Posterior cingulate gyrus (tissue), 11 donors: ENCODE measurements at regions of chr6 and their contacts with region 1.

Region 1: DNA sequence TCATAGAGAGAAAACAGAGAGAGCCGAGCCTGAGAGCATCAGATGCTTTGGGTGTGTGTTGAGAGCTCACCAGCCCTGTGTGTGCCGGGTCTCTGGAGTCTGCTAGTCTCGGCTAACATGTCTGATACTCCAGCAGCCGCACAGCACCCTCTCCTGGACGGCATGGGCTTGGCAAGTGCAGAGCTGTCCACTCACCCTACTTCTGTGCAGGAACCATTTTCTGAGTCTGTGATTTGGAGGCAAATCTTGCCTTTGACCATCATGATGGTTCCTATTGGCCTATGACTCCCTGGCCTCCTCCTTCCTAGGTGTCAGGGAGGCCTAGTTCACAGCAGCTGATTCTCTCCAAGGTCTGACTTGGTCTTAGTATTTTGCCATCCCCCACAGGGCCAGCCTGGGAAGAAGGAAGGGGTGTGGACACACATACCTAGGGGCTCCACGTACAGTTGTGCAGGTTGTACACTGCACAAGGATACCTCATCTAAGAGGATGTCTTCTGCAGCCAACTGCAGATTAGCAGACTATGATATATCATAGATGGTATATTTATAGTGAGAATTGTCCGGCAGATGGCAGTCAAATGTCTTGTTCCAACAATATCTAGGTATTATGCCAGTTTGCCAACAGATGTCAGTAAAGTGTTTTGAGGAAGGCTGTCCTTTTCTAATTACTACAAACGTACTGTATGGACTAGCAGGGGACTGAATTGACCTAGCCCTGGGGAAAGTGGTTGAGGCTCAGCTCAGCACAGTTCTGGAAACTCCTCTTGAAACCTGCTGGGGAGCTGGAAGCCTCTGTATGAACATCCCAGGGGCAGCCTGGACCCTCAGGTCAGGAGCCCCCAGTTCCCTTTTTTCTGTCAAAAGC is 13.0 kb downstream of the FGD2 start:
- DNase-seq: peak; percentile 85 to 99 (median 94)

Region 2: GRCh38 chr6:36979347-36979742 is 39.1 kb before region 1 on chr6:
- intact Hi-C with region 1: loop called (anchors 1 kb)
- DNase-seq: peak; percentile 65 to 96 (median 78)

Region 3: GRCh38 chr6:37210313-37210968 is 192.0 kb after region 1 on chr6:
- intact Hi-C with region 1: loop called (anchors 1 kb)
- DNase-seq: peak in 4 of 10 donors; percentile 63 to 79 (median 66)